HEK293 (cell line): ENCODE measurements at regions of chr1 and their contacts with region 1.

Region 1: DNA sequence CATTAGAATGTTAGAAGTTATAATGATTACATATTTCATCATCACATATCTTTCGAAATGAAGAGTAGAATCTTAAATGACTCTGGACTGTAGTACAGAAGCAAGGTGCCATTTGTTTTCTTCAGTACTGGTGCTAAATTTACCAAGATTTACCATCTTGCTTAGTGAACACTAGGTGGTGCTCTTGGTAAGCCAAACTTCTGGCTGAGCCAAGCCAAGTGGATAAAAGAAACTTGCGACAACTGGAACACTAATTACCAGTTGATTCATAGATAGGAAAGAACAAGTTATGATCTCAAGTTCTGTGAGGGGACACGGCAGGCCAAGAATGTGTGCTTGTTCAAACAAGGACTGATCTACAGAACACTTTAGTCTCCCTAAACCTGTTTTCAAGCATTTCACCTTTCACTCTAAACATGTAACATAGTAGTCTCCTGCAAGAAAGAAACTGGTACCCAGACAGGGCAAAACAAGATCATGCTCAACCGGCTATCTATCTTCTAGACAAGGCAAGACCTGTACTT is 19.8 kb downstream of the SPRTN start:
- H3K4me3 ChIP-seq: no peak overlapping the region
- H3K27ac ChIP-seq: no peak overlapping the region
- H3K4me1 ChIP-seq: 0 out of 2 replicates have a peak, but pooled peaks cover 3% of the 10 kb centered on the region
- CTCF ChIP-seq: peak; percentile 80

Region 2: DNA sequence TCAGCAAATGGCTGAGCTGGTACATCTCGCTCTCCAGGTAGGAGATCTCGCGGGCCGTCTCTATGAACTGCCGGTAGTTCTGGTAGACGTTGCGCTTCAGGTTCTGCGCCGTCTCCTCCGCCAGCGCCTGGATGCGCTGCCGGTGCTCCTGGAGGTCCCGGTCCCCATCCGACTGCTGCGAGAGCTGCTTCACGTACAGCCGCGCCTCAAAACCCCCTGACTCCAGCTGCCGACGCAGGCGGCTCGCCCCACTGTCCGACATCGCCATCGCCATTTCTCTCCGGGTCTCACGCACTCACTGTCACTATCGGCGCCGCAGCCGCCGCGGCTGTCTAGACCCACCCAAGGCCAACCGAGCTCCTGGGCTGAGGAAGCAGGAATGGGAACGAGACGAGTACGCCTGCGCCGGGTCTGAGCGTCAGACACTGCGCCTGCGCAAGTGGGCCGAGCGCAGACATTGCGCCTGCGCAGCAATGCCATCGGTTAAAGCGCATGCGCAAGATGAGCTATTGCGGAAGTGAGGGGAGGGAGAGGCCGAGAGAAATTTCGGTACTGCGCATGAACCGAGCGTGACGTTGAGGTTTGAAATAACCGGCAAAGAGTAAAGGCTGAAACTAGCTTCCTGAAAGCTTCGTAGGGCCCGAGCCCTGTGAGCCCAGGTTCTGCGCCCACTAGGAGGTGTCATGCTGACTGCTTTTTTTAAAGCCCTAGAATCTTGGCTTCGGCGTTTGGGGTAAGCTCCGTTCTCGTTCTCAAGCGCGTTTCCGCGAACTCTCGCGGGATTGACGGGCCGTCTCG is 20.2 kb before region 1 on chr1 and contains the start of gene EXOC8:
- CTCF ChIA-PET with region 1: interaction called, 9 read pairs
- POLR2A ChIA-PET with region 1: interaction called, 11 read pairs
- H3K4me3 ChIP-seq: peak within 1 kb of the TSS; percentile 68
- H3K27ac ChIP-seq: peak within 1 kb of the TSS; percentile 83
- H3K4me1 ChIP-seq: peaks cover 9% of the 10 kb centered on the region
- CTCF ChIP-seq: peak; percentile 63; the same call in 1 of the 2 replicates

Region 3: GRCh38 chr1:231374394-231374793 is 16.5 kb after region 1 on chr1:
- CTCF ChIA-PET with region 1: interaction called, 7 read pairs
- POLR2A ChIA-PET with region 1: interaction called, 10 read pairs
- H3K4me3 ChIP-seq: no peak overlapping the region
- H3K27ac ChIP-seq: no peak overlapping the region
- H3K4me1 ChIP-seq: peaks cover 12% of the 10 kb centered on the region; the same call in 1 of the 2 replicates
- CTCF ChIP-seq: no peak

Region 4: GRCh38 chr1:231390071-231390470 is 32.2 kb after region 1 on chr1:
- CTCF ChIA-PET with region 1: interaction called, 10 read pairs
- POLR2A ChIA-PET with region 1: interaction called, 3 read pairs
- H3K4me3 ChIP-seq: no peak overlapping the region
- H3K27ac ChIP-seq: no peak overlapping the region
- H3K4me1 ChIP-seq: peaks cover under 1% of the 10 kb centered on the region; the same call in 1 of the 2 replicates
- CTCF ChIP-seq: no peak

Region 5: DNA sequence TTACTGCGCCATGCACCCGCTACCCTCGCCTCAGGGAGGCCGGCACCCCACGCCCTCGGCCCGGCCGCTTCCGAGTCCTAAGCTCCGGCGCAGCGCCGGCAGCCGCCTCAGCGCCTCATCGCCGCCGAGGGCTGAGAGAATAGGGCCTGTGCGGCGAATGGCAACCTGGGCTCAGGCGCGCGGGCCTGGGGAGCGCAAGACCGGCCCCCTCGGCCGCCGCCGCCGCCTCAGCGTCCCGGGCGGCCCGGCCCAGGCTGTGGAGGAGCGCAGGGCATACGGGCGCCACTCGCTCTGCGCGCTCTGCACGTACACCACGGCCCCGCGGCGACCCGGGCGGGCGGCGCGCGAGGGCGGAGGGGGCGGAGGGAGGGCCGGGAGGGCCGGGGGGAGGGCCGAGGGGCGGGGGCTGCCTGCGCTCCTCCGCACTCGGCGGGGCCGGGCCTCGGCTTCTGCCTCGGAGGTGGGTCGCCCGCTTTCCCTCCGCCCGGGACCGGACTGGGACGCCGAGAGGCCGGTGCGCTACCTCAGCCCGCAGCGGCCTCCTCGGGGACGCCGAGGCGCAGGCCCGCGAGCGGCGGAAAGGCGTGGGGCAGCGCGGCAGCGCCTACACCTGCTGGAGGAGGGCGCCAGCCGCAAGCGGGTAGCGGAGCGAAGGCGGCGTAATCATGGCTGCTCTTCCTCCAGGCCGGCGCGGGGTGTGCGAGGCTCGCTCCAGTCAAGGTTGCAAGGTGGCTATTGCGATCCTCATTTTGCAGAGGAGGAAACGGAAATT is 64.3 kb after region 1 on chr1 and contains the start of gene EGLN1:
- CTCF ChIA-PET with region 1: interaction called, 13 read pairs
- POLR2A ChIA-PET with region 1: interaction called, 4 read pairs
- H3K4me3 ChIP-seq: peak within 1 kb of the TSS; percentile 97
- H3K27ac ChIP-seq: peak within 1 kb of the TSS; percentile 98
- H3K4me1 ChIP-seq: peaks cover 24% of the 10 kb centered on the region
- CTCF ChIP-seq: peak; percentile 99

Region 6: GRCh38 chr1:231590453-231591198 is 232.7 kb after region 1 on chr1:
- CTCF ChIA-PET with region 1: interaction called, 87 read pairs
- POLR2A ChIA-PET with region 1: no interaction called
- H3K4me3 ChIP-seq: no peak overlapping the region
- H3K27ac ChIP-seq: no peak overlapping the region
- H3K4me1 ChIP-seq: no peaks in the 10 kb centered on the region
- CTCF ChIP-seq: peak; percentile 90

Region 7: GRCh38 chr1:231603598-231604275 is 245.8 kb after region 1 on chr1:
- CTCF ChIA-PET with region 1: interaction called, 14 read pairs
- POLR2A ChIA-PET with region 1: interaction called, 3 read pairs
- H3K4me3 ChIP-seq: peak overlapping the region; percentile 42
- H3K27ac ChIP-seq: no peak overlapping the region; the same call in 1 of the 2 replicates
- H3K4me1 ChIP-seq: peaks cover 26% of the 10 kb centered on the region; the same call in 1 of the 2 replicates
- CTCF ChIP-seq: peak; percentile 54